IMR-90 (cell line): ENCODE measurements at regions of chr3 and their contacts with region 1.

Region 1: GRCh38 chr3:139016430-139017048 is 4.2 kb downstream of the PRR23B start:
- DNase-seq: no peak
- ATAC-seq: no peak
- H3K4me3 ChIP-seq: no peak overlapping the region
- H3K27ac ChIP-seq: no peak overlapping the region
- H3K4me1 ChIP-seq: no peaks in the 10 kb centered on the region
- H3K27me3 ChIP-seq: no peaks in the 10 kb centered on the region
- CTCF ChIP-seq: no peak
- POLR2A ChIP-seq: no peak
- RAD21 ChIP-seq: no peak

Region 2: DNA sequence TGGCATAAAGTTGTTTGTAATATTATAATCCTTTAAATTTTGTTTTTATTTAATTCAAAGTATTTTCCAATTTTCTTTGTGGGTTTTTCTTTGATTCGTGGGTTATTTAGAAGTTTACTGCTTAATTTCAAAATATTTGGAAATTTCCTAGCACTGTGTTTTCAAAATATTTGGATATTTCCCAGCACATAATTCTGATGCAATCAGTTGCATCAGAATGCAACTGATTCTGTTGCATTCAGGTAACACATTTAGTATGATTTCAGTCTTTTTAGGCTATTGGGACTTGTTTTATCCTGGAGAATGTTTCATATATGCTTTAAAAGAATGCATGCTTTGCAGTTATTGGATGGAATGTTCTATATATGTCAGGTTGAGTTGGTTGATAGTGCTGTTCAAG is 46.4 kb after region 1 on chr3:
- CTCF ChIA-PET with region 1: no interaction called
- POLR2A ChIA-PET with region 1: no interaction called
- dilution Hi-C with region 1: no loop called
- in situ Hi-C with region 1: no loop called
- intact Hi-C with region 1: loop called (anchors 10 kb)
- DNase-seq: no peak
- ATAC-seq: no peak
- H3K4me3 ChIP-seq: no peak overlapping the region
- H3K27ac ChIP-seq: no peak overlapping the region
- H3K4me1 ChIP-seq: no peaks in the 10 kb centered on the region
- H3K27me3 ChIP-seq: no peaks in the 10 kb centered on the region
- CTCF ChIP-seq: no peak
- POLR2A ChIP-seq: no peak
- RAD21 ChIP-seq: no peak